Heart right ventricle (tissue), 16 donors: ENCODE measurements at regions of chr6 and their contacts with region 1.

Region 1: DNA sequence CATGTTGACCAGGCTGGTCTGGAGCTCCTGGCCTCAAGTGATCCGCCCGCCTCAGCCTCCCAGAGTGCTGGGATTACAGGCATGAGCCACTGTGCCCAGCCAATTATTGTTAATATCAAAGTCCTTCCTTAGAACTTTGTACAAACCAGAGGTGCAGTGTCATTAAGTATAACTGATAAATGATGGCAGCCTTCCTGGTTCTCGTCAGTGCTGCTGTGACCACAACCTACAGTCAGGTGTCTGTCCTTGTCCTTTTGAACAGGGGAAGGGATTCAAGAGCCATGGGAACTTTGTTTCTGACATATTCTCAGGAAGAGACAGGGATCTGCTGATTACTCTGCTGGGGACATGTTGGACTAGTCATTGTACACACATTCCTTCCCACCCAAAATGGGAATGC is 103.2 kb upstream of the TIAM2 start:
- DNase-seq: no peak
- ATAC-seq: peak in 5 of 8 donors; percentile 47 to 77 (median 69)
- H3K4me3 ChIP-seq: no peak overlapping the region
- H3K27ac ChIP-seq: peak overlapping the region in 2 of 10 donors; percentile 1 to 22
- H3K4me1 ChIP-seq: peaks cover 3 to 49% (median 19%) of the 10 kb centered on the region in 9 donors
- H3K27me3 ChIP-seq: no peaks in the 10 kb centered on the region
- CTCF ChIP-seq: no peak

Region 2: GRCh38 chr6:154830771-154831170 is 61.1 kb before region 1 on chr6:
- intact Hi-C with region 1: loop called in 1 of 10 experiments (anchors 2 kb)
- DNase-seq: no peak
- ATAC-seq: no peak
- H3K4me3 ChIP-seq: no peak overlapping the region
- H3K27ac ChIP-seq: no peak overlapping the region
- H3K4me1 ChIP-seq: peaks cover 0 to 21% (median 14%) of the 10 kb centered on the region in 9 donors
- H3K27me3 ChIP-seq: no peaks in the 10 kb centered on the region
- CTCF ChIP-seq: no peak